ENCODE measurements at regions of chr11 and their contacts with region 1.

Region 1: DNA sequence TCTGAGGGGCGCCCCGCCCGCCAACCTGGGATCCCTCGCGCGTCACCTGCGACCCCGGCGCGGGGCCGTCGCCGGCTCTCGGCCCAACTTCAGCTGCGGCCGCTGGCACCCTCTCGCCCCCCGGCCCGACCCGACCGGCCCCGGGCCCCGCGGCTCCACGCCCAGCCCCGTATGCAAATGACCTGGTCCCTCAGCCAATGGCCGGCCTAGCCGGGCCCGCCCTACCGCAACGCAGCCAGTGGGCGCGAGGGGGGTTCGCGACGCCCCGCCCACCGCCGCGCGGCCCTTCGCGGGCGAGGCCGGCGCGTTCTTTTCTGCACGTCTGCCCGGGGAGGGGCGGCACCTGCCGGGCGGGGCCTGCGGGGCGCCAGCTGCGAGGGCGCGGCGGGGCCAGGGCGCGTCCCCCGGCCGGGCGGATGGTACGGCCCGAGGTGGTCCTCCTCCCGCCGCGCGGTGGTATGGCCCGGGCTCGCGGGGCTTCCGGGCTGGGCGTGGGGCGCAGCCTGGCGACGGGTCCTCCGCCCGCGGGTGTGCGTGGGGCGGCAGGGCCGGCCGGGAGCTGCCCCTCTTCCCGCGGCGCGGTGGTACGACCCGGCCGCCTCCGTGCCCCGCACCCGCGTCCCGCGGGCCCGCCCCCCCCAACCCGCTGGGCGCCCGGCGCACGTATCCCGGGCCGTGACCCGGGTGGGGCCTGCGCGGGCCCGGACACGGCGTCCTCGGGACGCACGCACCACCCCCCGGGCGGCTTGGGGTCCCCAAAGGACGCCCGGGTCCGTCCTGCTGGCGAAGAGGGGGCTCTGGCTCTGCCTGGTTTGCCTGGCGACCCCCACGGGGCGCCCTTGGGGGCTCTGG is 7.7 kb upstream of the PHRF1 start:
- DNase-seq: peak; percentile 91
- H3K4me3 Mint-ChIP-seq: peak overlapping the region; percentile 70
- H3K27ac Mint-ChIP-seq: no peak overlapping the region
- H3K4me1 Mint-ChIP-seq: no peaks in the 10 kb centered on the region
- H3K27me3 Mint-ChIP-seq: no peaks in the 10 kb centered on the region
- CTCF ChIP-seq: no peak

Region 2: GRCh38 chr11:488999-489398 is 79.5 kb before region 1 on chr11:
- CTCF ChIA-PET with region 1: no interaction called
- POLR2A ChIA-PET with region 1: no interaction called
- intact Hi-C with region 1: no loop called
- DNase-seq: no peak
- H3K4me3 Mint-ChIP-seq: no peak overlapping the region
- H3K27ac Mint-ChIP-seq: no peak overlapping the region
- H3K4me1 Mint-ChIP-seq: no peaks in the 10 kb centered on the region
- H3K27me3 Mint-ChIP-seq: no peaks in the 10 kb centered on the region
- CTCF ChIP-seq: no peak

Region 3: DNA sequence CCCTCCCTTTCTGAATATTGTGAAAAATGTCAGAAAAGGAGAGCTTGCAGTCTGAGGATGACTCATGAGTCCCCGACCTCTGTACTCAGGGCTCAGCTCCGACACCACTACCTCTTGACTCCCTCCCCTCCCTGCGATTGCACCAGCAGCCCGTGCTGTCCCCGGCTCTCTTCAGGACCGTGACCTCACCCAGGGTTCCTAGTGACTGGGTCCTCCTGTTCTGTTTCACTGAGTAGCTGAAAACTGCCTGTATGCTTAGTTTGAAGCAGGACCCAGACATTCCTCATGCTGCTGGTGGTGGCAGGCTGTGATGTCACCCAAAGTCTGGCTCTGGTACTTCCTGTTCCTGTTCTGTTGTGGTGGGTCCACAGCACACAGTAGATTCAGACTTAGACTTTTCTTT is 19.4 kb after region 1 on chr11:
- CTCF ChIA-PET with region 1: no interaction called
- POLR2A ChIA-PET with region 1: no interaction called
- intact Hi-C with region 1: no loop called
- DNase-seq: peak; percentile 73
- H3K4me3 Mint-ChIP-seq: no peak overlapping the region
- H3K27ac Mint-ChIP-seq: no peak overlapping the region
- H3K4me1 Mint-ChIP-seq: no peaks in the 10 kb centered on the region
- H3K27me3 Mint-ChIP-seq: no peaks in the 10 kb centered on the region
- CTCF ChIP-seq: no peak

Region 4: GRCh38 chr11:615504-616319 is 47.2 kb after region 1 on chr11 and contains the start of gene IRF7:
- CTCF ChIA-PET with region 1: no interaction called
- POLR2A ChIA-PET with region 1: no interaction called
- intact Hi-C with region 1: loop called (anchors 10 kb)
- DNase-seq: peak; percentile 93
- H3K4me3 Mint-ChIP-seq: peak within 1 kb of the TSS; percentile 73
- H3K27ac Mint-ChIP-seq: peak within 1 kb of the TSS; percentile 16
- H3K4me1 Mint-ChIP-seq: peaks cover 6% of the 10 kb centered on the region
- H3K27me3 Mint-ChIP-seq: no peaks in the 10 kb centered on the region
- CTCF ChIP-seq: no peak
- total RNA-seq, gene IRF7: 7.7 and 9.5 TPM in 2 replicates